ENCODE measurements at regions of chr14 and their contacts with region 1.

Region 1: DNA sequence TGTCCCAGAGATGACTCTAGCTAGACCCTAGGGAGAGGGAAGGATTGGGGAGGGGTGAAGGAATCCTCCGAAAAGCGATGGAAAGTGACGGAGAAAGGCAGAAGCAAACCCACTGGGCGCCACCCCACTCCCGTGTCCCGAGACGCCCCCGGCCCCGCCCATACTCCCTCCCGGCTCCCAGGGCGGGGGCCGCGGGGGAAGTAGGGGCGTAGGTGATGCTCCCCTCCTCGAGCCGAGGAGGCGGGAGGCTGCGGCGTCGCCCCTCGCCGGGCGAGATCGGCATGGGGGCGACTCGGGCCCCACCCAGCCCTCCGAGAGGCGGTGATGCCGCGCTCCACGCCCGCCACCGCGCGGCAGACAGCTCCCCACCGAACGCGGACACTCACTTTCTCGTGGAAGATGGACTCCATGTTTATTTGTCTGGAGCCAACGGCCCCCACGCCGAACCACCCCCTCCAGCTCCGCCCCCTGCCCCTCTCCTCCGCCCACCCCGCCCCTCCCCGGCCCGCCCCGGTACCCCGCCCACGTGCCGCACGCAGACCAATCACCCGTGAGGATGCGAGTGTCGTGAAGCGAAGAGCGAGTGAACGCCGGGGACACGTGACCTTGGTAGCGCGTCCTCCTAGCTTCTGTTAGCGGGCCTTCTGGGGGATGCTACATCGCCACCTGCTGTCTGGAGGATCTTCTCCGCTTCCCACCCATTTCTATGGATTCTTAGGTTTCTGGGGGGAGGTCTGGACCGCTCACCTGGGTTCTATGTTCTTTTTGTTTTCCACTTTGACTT is at the start of gene ATXN3:
- H3K4me3 Mint-ChIP-seq: peak within 1 kb of the TSS; percentile 98
- H3K27ac Mint-ChIP-seq: peak within 1 kb of the TSS; percentile 97
- H3K4me1 Mint-ChIP-seq: peaks cover 49% of the 10 kb centered on the region
- H3K27me3 Mint-ChIP-seq: peaks cover 5% of the 10 kb centered on the region

Region 2: GRCh38 chr14:92039719-92040430 is 66.5 kb before region 1 on chr14 and contains the start of gene TRIP11:
- intact Hi-C with region 1: loop called (anchors 1 kb)
- H3K4me3 Mint-ChIP-seq: peak within 1 kb of the TSS; percentile 91
- H3K27ac Mint-ChIP-seq: peak within 1 kb of the TSS; percentile 97
- H3K4me1 Mint-ChIP-seq: peaks cover 27% of the 10 kb centered on the region
- H3K27me3 Mint-ChIP-seq: no peaks in the 10 kb centered on the region

Region 3: GRCh38 chr14:92121670-92122350 is 15.5 kb after region 1 on chr14 and contains the starts of genes CPSF2 and NDUFB1:
- intact Hi-C with region 1: loop called (anchors 1 kb)
- H3K4me3 Mint-ChIP-seq: peak within 1 kb of the TSS; percentile 97
- H3K27ac Mint-ChIP-seq: peak within 1 kb of the TSS; percentile 98
- H3K4me1 Mint-ChIP-seq: peaks cover 38% of the 10 kb centered on the region
- H3K27me3 Mint-ChIP-seq: no peaks in the 10 kb centered on the region

Measured in dendritic cell treated with granulocyte-macrophage colony-stimulating factor and Interleukin-4, amounts not matched to agents 40 ng/mL and 50 ng/mL, for 4 days (primary cell).